Natural killer cell (primary cell): ENCODE measurements at regions of chr15 and their contacts with region 1.

Region 1: DNA sequence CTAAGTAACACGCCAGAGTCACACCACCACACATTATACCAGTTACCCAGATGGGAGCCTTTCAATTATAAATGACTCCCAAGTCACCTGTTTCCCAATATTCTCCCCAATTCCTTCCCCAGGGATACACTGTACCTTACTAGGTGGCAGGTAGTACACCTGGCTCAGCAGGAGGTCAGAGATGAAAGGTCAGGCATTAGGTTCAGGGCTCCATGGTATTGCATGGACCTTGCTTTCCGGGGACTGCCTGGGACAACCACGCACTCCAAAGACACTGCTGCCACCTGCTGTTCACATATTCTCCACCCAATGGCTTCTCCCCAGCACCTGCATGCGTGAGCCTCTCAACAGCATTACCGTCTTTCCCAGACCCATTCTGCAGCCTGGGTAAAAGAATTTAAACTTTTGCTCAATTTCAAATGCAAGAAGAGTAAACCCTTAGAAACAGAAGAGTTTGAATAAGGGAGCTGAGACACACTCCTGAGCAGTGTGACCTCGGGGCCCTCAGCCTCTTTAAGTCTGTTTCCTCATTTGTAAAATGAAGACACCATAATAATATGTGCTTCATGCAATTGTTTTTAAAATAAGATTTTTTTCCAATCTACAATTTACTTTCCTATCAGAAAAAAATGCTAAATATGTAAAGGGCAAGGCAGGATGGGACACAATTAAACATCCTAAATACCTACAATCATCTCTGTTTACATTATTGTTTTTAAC is 28.0 kb upstream of the LACTB start:
- DNase-seq: peak; percentile 52 to 84
- ATAC-seq: peak; percentile 82 to 86 (median 86)
- H3K4me3 ChIP-seq: no peak overlapping the region
- H3K4me3 Mint-ChIP-seq: no peak overlapping the region
- H3K27ac ChIP-seq: no peak overlapping the region
- H3K27ac Mint-ChIP-seq: no peak overlapping the region
- H3K4me1 ChIP-seq: peaks cover 5% of the 10 kb centered on the region
- H3K4me1 Mint-ChIP-seq: peaks cover 9 to 18% of the 10 kb centered on the region in 2 donors
- H3K27me3 ChIP-seq: no peaks in the 10 kb centered on the region
- H3K27me3 Mint-ChIP-seq: peaks cover 0 to 5% of the 10 kb centered on the region in 2 donors
- CTCF ChIP-seq: peak; percentile 85

Region 2: GRCh38 chr15:62847900-62848489 is 245.7 kb before region 1 on chr15:
- intact Hi-C with region 1: loop called (anchors 1 kb)
- DNase-seq: peak; percentile 21 to 61
- ATAC-seq: no peak
- H3K4me3 ChIP-seq: no peak overlapping the region
- H3K4me3 Mint-ChIP-seq: no peak overlapping the region
- H3K27ac ChIP-seq: no peak overlapping the region
- H3K27ac Mint-ChIP-seq: no peak overlapping the region
- H3K4me1 ChIP-seq: no peaks in the 10 kb centered on the region
- H3K4me1 Mint-ChIP-seq: no peaks in the 10 kb centered on the region
- H3K27me3 ChIP-seq: no peaks in the 10 kb centered on the region
- H3K27me3 Mint-ChIP-seq: peaks cover 3 to 7% of the 10 kb centered on the region in 2 donors
- CTCF ChIP-seq: peak; percentile 40

Region 3: DNA sequence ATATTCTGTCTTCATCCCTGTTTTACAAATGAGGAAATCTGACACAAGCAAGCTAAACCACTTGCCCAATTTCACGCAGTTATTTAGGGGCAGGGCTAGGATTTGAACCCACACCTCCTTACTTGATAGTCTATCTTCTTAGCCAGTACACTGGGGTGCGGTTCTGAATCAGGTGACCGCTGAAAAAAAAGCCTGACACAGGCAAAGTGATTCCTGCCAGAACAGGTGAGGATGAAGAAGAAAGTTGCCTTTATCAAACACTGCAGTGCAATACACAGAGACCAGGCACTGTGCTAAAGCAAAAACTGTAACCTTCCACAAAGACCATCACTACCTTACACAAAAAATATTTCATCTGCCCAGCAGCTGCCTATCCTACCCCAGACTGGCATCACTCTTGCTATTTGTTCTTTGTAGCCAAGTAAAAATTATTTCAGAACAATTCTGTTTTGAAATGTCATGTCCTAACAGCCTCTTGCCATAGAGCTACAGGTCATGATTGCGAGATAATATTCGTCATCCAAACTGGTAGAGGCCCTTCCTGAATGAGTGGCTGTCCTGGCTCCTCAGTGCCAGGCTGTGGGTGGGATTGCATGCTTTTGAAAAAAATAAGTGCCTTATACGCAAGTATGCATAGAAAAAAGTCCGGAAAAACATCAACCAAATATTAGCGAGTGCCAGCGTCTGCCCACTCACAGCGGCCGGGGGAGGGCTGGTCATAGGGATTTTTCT is 193.4 kb before region 1 on chr15:
- intact Hi-C with region 1: loop called (anchors 1 kb)
- DNase-seq: no peak
- ATAC-seq: no peak
- H3K4me3 ChIP-seq: no peak overlapping the region
- H3K4me3 Mint-ChIP-seq: no peak overlapping the region
- H3K27ac ChIP-seq: no peak overlapping the region
- H3K27ac Mint-ChIP-seq: no peak overlapping the region
- H3K4me1 ChIP-seq: no peaks in the 10 kb centered on the region
- H3K4me1 Mint-ChIP-seq: no peaks in the 10 kb centered on the region
- H3K27me3 ChIP-seq: no peaks in the 10 kb centered on the region
- H3K27me3 Mint-ChIP-seq: no peaks in the 10 kb centered on the region
- CTCF ChIP-seq: no peak

Region 4: DNA sequence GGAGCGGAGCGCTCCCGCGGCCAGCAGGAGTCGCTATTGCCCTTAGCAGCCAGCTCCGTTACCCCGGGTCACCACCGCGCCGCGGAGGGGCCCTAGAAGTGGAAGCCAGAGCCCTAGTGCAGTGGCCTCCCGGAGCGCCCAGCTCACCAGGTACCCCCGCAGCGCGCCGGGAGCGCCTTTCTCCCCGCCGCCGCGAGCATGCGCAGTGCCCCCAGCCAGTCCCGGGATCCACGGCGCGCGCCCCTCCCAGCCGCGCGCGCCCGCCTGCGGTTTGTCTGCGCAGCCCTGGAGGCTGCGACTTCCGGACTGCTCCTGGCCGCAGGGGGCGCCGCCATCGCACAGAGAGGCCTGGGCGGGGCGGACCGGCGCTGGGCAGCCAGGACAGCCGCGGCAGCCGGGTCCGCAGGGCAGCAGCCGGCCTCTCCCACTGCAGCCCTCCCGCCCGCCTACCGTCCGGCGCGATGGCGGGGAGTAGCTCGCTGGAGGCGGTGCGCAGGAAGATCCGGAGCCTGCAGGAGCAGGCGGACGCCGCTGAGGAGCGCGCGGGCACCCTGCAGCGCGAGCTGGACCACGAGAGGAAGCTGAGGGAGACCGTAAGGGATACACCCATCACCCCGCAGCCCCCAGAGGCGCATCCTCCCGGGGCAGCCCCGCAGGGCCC is 45.4 kb before region 1 on chr15:
- intact Hi-C with region 1: loop called (anchors 1 kb)
- DNase-seq: peak; percentile 83 to 93
- ATAC-seq: peak; percentile 86 to 92 (median 87)
- H3K4me3 ChIP-seq: peak overlapping the region; percentile 61
- H3K4me3 Mint-ChIP-seq: peak overlapping the region; percentile 96
- H3K27ac ChIP-seq: peak overlapping the region; percentile 51
- H3K27ac Mint-ChIP-seq: peak overlapping the region; percentile 77 to 85
- H3K4me1 ChIP-seq: peaks cover 22% of the 10 kb centered on the region
- H3K4me1 Mint-ChIP-seq: peaks cover 39% of the 10 kb centered on the region in 2 donors
- H3K27me3 ChIP-seq: peaks cover 30% of the 10 kb centered on the region
- H3K27me3 Mint-ChIP-seq: peaks cover 35 to 36% of the 10 kb centered on the region in 2 donors
- CTCF ChIP-seq: peak; percentile 98